RWPE1 (cell line): ENCODE measurements at regions of chr5 and their contacts with region 1.

Region 1: DNA sequence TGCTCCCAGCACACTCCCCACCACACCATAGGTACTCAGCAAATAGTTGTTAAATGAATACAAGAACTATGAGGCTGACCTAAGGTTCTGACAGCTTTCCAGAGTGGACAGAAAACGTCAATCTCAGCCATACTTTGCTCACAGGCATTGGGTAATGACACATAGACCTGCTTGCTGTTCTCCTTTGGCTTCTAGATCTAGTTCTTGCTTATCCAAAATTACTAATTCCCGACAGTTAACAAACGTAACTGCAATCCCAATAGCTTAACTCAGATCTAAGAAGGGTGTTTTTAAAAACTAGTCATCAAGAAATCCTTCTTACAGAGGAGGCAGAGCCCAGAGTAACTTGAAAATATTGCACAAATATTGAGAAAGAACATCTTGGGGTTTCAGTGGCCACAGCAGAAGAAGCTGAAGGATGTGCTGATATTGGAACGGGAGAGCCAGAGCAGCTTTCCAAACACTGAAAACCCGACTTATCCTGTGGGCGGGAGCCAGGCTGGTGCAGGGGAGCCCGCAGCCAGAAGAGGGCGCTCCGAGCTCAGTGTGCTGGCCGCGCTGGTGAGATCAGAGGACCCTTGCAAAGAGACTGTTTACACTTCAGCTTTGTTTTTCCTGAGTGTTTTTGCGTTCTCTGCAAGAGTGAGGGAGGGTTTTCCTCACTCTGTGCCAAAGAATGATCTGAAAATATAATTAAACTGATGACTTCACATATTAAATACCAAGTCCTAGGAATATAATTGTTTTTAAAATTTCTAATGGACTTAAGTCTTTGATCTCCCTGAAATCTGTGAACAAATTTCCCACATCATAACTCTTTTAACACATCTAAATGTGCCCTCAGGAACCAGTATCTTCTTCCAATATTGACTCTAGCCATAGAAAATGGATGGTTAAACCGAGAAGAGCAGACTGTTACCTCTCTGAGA is 30.3 kb downstream of the FGF1 start:
- DNase-seq: peak; percentile 87
- H3K27ac ChIP-seq: no peak overlapping the region
- CTCF ChIP-seq: peak; percentile 100

Region 2: DNA sequence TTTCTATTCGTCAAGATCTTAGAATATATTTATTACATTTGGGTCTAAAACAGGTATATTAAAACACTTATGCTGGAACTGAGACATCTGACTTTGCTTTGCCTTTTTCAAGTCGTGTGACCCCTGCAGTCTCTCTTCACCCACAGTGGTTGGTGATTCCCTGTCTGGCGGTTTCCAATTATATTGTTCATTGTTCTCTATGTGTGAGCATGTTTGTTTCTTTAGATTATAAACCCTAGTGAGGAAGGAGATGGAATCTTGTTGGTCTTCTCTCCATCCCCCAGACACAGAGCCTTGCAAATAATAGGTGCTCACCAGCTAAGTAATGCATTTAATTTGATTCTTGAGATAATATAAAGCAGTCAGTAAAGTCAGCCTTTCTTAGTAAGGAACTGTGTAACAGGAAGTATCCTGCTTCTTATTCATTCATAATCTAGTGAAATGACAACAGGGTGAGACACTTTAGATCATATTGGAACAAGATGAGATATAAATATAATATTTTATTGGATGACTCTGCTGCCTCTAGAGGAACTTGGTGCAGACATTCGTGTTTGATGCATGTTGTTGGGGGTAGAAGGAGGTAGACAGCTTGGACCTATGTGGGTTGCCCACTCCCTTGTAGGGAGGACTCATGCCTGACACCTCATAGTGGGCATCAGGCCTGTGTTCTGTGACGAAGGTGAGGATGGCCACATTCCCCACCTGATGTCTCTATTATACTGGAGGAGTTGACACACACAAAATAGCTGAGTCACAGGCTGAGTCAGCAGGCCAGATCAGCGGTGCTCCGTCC is 57.9 kb before region 1 on chr5:
- CTCF ChIA-PET with region 1: interaction called, 13 read pairs
- POLR2A ChIA-PET with region 1: no interaction called
- DNase-seq: peak; percentile 76
- H3K27ac ChIP-seq: no peak overlapping the region
- CTCF ChIP-seq: no peak

Region 3: GRCh38 chr5:142611154-142611553 is 44.4 kb before region 1 on chr5:
- CTCF ChIA-PET with region 1: interaction called, 20 read pairs
- POLR2A ChIA-PET with region 1: no interaction called
- DNase-seq: peak; percentile 81
- H3K27ac ChIP-seq: no peak overlapping the region
- CTCF ChIP-seq: peak; percentile 99

Region 4: DNA sequence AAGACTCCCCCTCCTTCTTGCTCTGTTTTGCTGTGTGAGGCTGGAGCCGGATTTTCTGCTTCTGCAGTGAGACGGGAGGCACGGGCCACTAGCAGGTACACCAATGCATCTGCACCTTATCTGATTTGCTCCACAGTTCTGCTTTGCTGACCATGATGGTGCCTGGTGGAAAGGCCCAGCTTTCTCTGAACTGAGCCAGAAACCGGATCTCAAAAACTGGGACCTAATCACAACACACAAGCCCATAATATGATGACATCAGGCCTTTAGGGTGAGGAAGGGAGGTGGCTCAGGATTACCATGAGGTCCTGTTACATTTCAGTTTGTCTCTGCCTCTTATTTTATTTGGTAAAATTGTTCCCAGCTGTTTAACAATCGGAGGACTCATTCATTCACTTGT is 19.5 kb before region 1 on chr5:
- CTCF ChIA-PET with region 1: interaction called, 16 read pairs
- POLR2A ChIA-PET with region 1: no interaction called
- DNase-seq: no peak
- H3K27ac ChIP-seq: no peak overlapping the region
- CTCF ChIP-seq: no peak

Region 5: GRCh38 chr5:142669477-142669876 is 13.9 kb after region 1 on chr5:
- CTCF ChIA-PET with region 1: interaction called, 18 read pairs
- POLR2A ChIA-PET with region 1: interaction called, 13 read pairs
- DNase-seq: no peak
- H3K27ac ChIP-seq: no peak overlapping the region
- CTCF ChIP-seq: no peak

Region 6: DNA sequence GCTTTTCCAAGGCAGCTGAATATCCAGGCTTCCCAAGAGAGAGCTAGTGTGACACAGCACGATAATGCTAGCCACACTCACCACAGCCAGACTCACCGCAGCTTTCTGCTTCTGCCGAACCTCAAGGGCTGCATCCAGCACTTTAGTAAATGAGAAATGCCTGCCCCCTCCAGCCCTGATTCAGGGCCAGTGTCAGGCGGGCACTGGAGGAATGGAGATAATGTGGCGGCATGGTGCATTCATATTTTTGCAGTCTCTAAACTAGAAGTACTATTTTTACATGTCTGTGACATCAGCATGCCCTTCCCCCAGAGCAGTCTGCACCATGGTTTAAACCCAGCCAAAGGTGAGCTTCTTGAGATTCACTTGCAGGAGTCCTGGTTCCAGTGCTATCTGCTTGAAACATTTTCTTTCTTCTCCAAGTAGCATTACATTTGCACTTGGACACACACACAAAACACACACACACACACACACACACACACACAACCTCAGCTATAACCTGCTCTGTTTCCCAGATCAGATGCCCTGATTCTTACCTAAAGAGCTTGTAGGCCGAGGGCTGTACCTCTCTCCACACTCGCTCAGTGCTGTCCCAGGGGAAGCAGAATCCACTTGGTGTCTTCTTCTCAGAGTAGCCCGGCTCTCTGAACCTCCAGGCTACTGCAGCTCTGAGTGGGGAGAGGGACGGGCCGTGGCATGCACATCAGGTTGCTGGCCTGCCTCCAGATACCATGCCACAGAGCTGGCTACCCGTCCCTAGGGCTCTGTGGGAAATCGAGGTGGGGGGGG is 30.0 kb after region 1 on chr5 and contains the start of gene FGF1:
- CTCF ChIA-PET with region 1: interaction called, 36 read pairs
- POLR2A ChIA-PET with region 1: no interaction called
- DNase-seq: peak; percentile 92
- H3K27ac ChIP-seq: peak within 1 kb of the TSS; percentile 92
- CTCF ChIP-seq: no peak

Region 7: DNA sequence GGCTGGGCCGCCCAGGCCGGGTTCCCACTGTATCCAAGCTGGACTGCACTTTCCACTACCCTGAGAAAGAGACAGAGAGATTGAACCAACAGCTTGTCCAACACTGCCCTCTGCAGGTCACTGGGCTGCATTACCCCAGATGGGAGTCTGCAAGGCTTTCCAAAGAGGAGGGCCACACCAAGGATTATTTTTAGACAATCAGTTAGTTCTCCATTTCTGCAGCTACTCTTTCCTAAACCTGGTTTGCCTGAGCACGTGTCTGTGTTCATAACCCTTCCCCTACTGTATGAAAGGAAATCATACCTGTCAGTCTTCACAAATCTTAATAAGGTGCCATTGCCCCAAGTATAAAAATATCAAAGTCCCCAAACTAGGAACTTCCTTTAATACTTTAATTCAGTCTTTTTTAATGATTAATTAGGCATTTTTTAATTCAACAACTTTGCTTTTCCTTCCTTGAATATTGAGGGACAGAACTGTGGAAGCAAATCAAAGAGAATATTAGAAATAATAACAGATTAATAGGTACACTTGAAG is 43.6 kb after region 1 on chr5:
- CTCF ChIA-PET with region 1: interaction called, 154 read pairs
- POLR2A ChIA-PET with region 1: no interaction called
- DNase-seq: peak; percentile 90
- H3K27ac ChIP-seq: no peak overlapping the region
- CTCF ChIP-seq: peak; percentile 99